Gastrocnemius medialis (tissue), 4 donors: ENCODE measurements at regions of chr3 and their contacts with region 1.

Region 1: DNA sequence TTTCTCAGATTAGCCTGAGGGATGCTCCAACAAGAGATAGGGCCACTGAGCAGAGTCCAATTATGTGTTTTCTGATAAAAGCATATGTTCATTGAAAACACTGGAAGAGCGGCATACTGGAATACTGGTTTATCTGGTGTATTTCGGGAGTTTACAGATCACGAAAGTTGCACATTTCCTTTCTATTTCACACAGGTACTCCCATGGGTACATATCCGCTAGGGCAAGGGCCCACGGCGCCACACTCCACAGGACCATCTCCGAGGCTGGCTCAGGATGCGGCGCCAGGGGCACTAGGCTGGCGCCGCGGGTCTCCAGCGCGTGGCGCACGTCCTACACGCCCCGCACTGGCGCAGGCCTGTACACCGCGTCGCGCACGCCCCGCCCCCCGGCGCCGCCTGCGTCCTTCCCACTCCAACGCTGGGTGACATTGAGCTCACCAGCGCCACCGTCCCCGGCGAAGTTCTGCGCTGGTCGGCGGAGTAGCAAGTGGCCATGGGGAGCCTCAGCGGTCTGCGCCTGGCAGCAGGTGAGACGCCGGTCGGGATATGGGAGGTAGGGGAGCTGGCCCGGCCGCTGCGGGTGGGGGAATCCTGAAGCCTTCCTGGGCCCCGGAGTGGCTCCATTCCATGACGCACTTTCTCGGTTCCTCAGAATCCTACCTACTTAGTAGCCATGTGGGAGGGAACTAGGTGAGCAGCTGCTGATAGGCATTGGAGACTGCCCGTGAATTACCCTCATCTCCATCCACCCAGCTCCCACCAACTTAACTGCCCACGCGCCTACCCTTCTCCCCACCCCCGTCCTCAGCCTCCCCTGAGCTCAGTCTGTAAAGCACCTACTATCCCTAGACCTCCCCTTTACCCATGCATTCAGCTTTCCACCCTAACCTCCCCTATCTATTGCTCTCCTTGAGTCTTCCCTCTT is at the start of gene FAM162A:
- DNase-seq: peak; percentile 85 to 94
- ATAC-seq: peak; percentile 83 to 86
- H3K4me3 ChIP-seq: peak within 1 kb of the TSS; percentile 73 to 96 (median 86)
- H3K27ac ChIP-seq: peak within 1 kb of the TSS; percentile 89 to 97 (median 93)
- H3K4me1 ChIP-seq: peaks cover 24% of the 10 kb centered on the region in 2 donors
- H3K27me3 ChIP-seq: no peaks in the 10 kb centered on the region
- CTCF ChIP-seq: peak in 4 of 5 experiments; percentile 41 to 71 (median 56)
- POLR2A ChIP-seq: peak; percentile 93 to 95
- total RNA-seq, gene FAM162A: 18.8 to 52.4 (median 43.3) TPM

Region 2: GRCh38 chr3:121834696-121835464 is 549.2 kb before region 1 on chr3 and contains the starts of genes EAF2 and IQCB1:
- in situ Hi-C with region 1: no loop called
- intact Hi-C with region 1: loop called (anchors 10 kb)
- DNase-seq: peak; percentile 92 to 94
- ATAC-seq: peak; percentile 98 to 99
- H3K4me3 ChIP-seq: peak within 1 kb of the TSS; percentile 73 to 96 (median 77)
- H3K27ac ChIP-seq: peak within 1 kb of the TSS; percentile 80 to 91 (median 88)
- H3K4me1 ChIP-seq: peaks cover 13 to 22% of the 10 kb centered on the region in 2 donors
- H3K27me3 ChIP-seq: no peaks in the 10 kb centered on the region
- CTCF ChIP-seq: no peak
- POLR2A ChIP-seq: peak; percentile 79 to 92
- total RNA-seq, gene EAF2: 2.6 to 5.7 (median 3.6) TPM
- total RNA-seq, gene IQCB1: 8.8 to 14.0 (median 11.8) TPM

Region 3: GRCh38 chr3:122458992-122459391 is 75.0 kb after region 1 on chr3:
- in situ Hi-C with region 1: no loop called
- intact Hi-C with region 1: no loop called
- DNase-seq: no peak
- ATAC-seq: peak; percentile 33 to 42
- H3K4me3 ChIP-seq: no peak overlapping the region
- H3K27ac ChIP-seq: no peak overlapping the region
- H3K4me1 ChIP-seq: no peaks in the 10 kb centered on the region
- H3K27me3 ChIP-seq: no peaks in the 10 kb centered on the region
- CTCF ChIP-seq: peak in 4 of 5 experiments; percentile 14 to 36 (median 28)
- POLR2A ChIP-seq: no peak

Region 4: GRCh38 chr3:122514123-122515019 is 130.3 kb after region 1 on chr3 and contains the start of gene KPNA1:
- in situ Hi-C with region 1: loop called in 2 of 4 experiments (anchors 10 kb)
- intact Hi-C with region 1: loop called (anchors 1 kb)
- DNase-seq: peak; percentile 90 to 93
- ATAC-seq: peak; percentile 76 to 84
- H3K4me3 ChIP-seq: peak within 1 kb of the TSS; percentile 65 to 94 (median 84)
- H3K27ac ChIP-seq: peak within 1 kb of the TSS; percentile 94 to 99 (median 97)
- H3K4me1 ChIP-seq: peaks cover 39 to 44% of the 10 kb centered on the region in 2 donors
- H3K27me3 ChIP-seq: no peaks in the 10 kb centered on the region
- CTCF ChIP-seq: no peak
- POLR2A ChIP-seq: peak; percentile 99 to 100
- total RNA-seq, gene KPNA1: 108 to 119 (median 112) TPM

Region 5: GRCh38 chr3:122793568-122794416 is 409.8 kb after region 1 on chr3 and contains the start of gene HSPBAP1:
- in situ Hi-C with region 1: loop called in 1 of 4 experiments (anchors 25 kb)
- intact Hi-C with region 1: loop called (anchors 2 kb)
- DNase-seq: peak; percentile 94 to 96
- ATAC-seq: peak; percentile 76 to 84
- H3K4me3 ChIP-seq: peak within 1 kb of the TSS; percentile 74 to 90 (median 78)
- H3K27ac ChIP-seq: peak within 1 kb of the TSS; percentile 95 to 99 (median 96)
- H3K4me1 ChIP-seq: peaks cover 55 to 56% of the 10 kb centered on the region in 2 donors
- H3K27me3 ChIP-seq: no peaks in the 10 kb centered on the region
- CTCF ChIP-seq: peak in 2 of 5 experiments; percentile 39 to 50
- POLR2A ChIP-seq: peak; percentile 96
- total RNA-seq, gene HSPBAP1: 14.5 to 30.7 (median 17.0) TPM

Region 6: GRCh38 chr3:123066896-123067688 is 683.1 kb after region 1 on chr3 and contains the start of gene PDIA5:
- in situ Hi-C with region 1: no loop called
- intact Hi-C with region 1: loop called (anchors 10 kb)
- DNase-seq: peak; percentile 81 to 85
- ATAC-seq: peak; percentile 94 to 97
- H3K4me3 ChIP-seq: peak within 1 kb of the TSS; percentile 70 to 88 (median 80)
- H3K27ac ChIP-seq: peak within 1 kb of the TSS; percentile 62 to 75 (median 70)
- H3K4me1 ChIP-seq: peaks cover 6 to 10% of the 10 kb centered on the region in 2 donors
- H3K27me3 ChIP-seq: no peaks in the 10 kb centered on the region
- CTCF ChIP-seq: no peak
- POLR2A ChIP-seq: peak; percentile 58 to 69
- total RNA-seq, gene PDIA5: 2.3 to 4.2 (median 3.0) TPM

Region 7: DNA sequence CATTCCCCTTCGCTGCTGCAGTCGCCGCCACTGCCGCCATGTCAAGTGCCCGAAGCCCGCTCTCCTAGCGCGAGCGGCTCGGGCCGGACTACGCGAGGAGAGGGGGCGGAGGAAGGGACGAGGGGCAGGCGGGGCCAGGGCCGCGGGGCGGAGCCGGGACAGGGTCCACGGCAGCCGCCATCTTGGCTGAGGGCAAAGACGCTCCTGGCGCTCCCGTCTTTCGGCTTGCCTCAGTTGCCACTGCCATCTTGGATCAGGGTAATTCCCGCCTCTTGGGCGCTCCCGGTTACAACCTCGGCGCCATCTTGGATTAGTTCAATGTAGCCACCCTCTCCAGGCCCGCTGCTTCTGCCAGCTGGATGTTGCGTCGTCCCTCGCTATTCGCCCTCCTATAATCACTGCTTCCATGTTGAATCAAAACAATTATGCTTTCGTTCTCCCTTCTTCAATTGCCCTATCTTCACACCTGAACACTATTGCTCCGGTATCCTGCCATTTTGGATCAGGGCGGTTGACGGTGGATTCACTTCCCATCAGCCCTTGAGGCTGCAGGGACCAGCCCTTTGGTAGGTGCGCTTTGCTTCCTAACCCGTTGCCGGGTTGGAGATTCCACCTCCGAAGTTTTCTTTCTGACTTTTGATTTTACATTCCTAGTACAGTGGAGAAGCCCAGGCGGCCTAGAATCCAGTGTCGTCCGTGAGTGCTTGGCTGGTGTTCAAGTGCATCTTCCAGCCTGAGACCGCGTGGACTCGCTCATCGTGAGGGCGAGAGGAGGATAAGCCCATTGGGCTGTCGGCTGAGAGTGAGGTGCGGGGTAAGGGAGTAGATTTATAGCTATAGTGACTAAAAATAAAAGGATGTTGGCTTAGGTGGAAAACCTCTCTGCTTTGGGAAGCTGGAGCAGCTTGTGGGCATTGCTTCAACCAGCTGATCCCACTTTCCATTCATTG is 1201.2 kb after region 1 on chr3 and contains the start of gene HACD2:
- in situ Hi-C with region 1: no loop called
- intact Hi-C with region 1: loop called (anchors 2 kb)
- DNase-seq: peak; percentile 94 to 95
- ATAC-seq: peak; percentile 94 to 98
- H3K4me3 ChIP-seq: peak within 1 kb of the TSS; percentile 83 to 93 (median 84)
- H3K27ac ChIP-seq: peak within 1 kb of the TSS; percentile 84 to 95 (median 92)
- H3K4me1 ChIP-seq: peaks cover 10 to 17% of the 10 kb centered on the region in 2 donors
- H3K27me3 ChIP-seq: no peaks in the 10 kb centered on the region
- CTCF ChIP-seq: no peak
- POLR2A ChIP-seq: peak; percentile 58 to 70
- total RNA-seq, gene HACD2: 3.9 to 19.8 (median 6.7) TPM